Body of pancreas (tissue), 4 donors: ENCODE measurements at regions of chr16 and their contacts with region 1.

Region 1: GRCh38 chr16:58011652-58012051 is 10.4 kb downstream of the USB1 start:
- DNase-seq: no peak
- ATAC-seq: no peak
- H3K4me3 ChIP-seq: no peak overlapping the region
- H3K27ac ChIP-seq: no peak overlapping the region
- H3K4me1 ChIP-seq: peaks cover 2% of the 10 kb centered on the region
- H3K27me3 ChIP-seq: no peaks in the 10 kb centered on the region
- CTCF ChIP-seq: no peak
- POLR2A ChIP-seq: no peak

Region 2: DNA sequence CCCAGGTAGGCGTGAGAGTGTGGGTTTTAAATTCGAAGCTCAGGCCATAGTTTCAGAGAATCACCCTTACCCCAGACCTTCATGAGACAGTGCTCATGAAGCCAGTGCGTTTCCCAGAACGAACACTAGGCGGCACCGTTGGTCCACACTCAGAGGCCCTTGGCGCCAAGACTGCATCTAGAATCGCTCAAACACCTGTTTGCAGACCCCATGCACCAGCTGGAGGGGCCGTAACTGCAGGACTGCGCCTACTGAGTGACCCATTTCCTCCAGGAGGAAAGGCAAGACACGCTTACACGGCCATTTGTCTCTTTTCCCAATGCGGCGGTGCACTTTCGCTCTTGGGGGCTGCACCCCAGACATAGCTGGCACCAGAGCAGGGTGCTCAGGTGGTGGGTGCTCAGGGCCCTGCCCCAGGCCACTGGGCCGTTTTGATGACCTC is 435.2 kb before region 1 on chr16:
- intact Hi-C with region 1: loop called (anchors 10 kb)
- DNase-seq: peak; percentile 82 to 90 (median 84)
- ATAC-seq: peak; percentile 86
- H3K4me3 ChIP-seq: no peak overlapping the region
- H3K27ac ChIP-seq: no peak overlapping the region
- H3K4me1 ChIP-seq: peaks cover 4% of the 10 kb centered on the region
- H3K27me3 ChIP-seq: no peaks in the 10 kb centered on the region
- CTCF ChIP-seq: peak; percentile 79 to 92 (median 89)
- POLR2A ChIP-seq: no peak